ENCODE measurements at regions of chr4 and their contacts with region 1.

Region 1: DNA sequence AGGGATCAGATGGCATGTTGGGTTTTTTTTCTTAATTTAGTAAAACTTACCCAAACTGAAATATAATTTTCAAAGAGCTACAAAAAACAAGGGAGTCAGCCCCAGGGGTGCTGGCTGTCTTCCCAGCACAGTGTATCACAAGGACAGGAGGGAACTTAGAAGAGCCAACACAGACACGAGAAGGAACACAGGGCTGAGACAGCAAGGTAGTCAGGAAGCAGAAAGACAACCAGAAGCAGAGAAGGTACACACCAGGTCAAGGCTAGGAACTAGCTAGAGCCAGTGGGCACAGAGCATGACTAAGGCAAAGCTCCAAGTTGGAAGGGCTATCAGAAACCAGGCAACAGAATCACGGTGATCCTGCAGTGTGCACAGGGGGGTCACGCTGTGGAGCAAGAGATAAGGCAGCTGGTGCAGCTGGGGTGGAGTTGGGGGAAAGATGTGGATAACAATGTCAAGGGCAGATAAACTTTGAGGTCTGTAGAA is 168.7 kb downstream of the NR3C2 start:
- DNase-seq: no peak
- H3K4me3 Mint-ChIP-seq: no peak overlapping the region
- H3K27ac Mint-ChIP-seq: peak overlapping the region; percentile 59
- H3K4me1 Mint-ChIP-seq: peaks cover 21% of the 10 kb centered on the region
- H3K27me3 Mint-ChIP-seq: no peaks in the 10 kb centered on the region
- CTCF ChIP-seq: no peak

Region 2: DNA sequence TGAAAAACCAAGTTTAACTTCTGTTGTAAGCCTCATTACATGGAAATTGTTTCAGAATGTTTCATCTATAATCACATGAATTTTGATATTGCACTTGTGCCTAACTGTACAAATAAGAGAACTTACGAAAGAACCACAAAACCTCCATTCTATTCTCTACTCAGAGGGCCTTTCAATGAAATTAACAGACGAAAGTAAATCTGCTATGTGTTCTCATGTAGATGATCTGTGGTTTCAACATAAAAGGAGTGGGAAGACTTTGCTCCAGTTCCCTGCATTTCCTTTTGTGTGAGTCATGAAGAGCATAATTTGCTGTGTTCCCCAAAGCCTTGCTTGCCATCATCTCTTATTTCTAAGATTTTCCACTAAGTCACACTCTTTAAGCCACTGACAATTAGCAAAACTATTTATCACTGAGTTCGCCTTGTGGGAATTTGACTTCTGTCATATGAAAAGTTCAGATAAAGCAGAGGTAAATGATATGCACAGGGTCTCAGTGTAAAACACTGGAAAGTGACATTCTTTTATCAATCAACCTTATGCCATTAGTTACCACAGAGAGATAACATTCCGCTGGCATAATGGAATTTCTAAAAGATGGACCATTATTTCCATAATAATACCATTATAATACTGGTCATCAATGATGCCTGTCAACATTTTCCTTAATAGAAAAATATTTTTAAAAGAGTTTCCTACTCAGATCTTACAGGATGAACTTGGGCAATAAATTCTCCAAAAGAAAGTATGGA is 161.1 kb before region 1 on chr4:
- CTCF ChIA-PET with region 1: no interaction called
- intact Hi-C with region 1: no loop called
- DNase-seq: no peak
- H3K4me3 Mint-ChIP-seq: no peak overlapping the region
- H3K27ac Mint-ChIP-seq: no peak overlapping the region
- H3K4me1 Mint-ChIP-seq: no peaks in the 10 kb centered on the region
- H3K27me3 Mint-ChIP-seq: no peaks in the 10 kb centered on the region
- CTCF ChIP-seq: no peak

Region 3: DNA sequence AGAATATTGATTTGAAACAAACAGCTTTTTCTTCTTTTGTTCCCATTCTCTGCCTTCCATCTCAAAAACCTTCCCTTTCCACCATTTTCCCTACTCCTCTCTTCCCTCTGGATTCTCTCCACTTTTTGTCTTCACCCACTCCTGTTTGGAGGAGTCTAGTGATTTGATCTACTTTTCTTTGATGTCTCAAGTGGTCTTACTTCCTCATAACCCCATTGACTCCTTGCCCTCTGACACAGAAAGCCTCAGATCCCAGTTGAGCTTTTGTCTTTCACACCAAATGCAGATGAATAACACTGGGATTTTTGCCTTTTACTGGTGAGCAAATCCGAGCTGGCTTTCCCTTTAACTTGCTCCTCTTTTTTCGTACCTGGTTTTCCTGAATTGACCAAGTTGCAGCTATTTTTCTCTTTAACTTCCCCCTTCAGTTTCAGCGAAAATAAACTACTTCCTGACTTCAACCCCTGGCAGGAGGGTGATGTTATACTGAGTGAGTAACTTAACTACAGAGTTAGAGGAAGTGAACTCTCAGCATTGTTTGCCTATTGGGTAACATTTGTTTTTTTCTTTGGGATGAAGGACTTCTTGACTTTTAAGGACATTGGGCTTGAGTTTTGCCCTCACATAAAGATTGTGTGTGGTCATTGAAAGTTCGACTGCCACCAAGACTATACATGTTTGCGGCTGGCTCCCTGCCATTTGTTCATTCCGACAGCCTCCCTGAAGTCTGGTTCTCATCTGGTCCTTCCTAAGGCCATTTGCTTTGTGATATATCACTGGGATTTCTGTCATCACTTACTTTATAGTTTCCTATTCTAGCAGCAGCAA is 561.5 kb after region 1 on chr4:
- CTCF ChIA-PET with region 1: no interaction called
- intact Hi-C with region 1: no loop called
- DNase-seq: peak; percentile 24
- H3K4me3 Mint-ChIP-seq: peak overlapping the region; percentile 48
- H3K27ac Mint-ChIP-seq: peak overlapping the region; percentile 98
- H3K4me1 Mint-ChIP-seq: peaks cover 20% of the 10 kb centered on the region
- H3K27me3 Mint-ChIP-seq: no peaks in the 10 kb centered on the region
- CTCF ChIP-seq: no peak

Region 4: GRCh38 chr4:148857239-148857972 is 583.9 kb after region 1 on chr4:
- CTCF ChIA-PET with region 1: no interaction called
- intact Hi-C with region 1: loop called (anchors 10 kb)
- DNase-seq: no peak
- H3K4me3 Mint-ChIP-seq: no peak overlapping the region
- H3K27ac Mint-ChIP-seq: peak overlapping the region; percentile 6
- H3K4me1 Mint-ChIP-seq: peaks cover 44% of the 10 kb centered on the region
- H3K27me3 Mint-ChIP-seq: no peaks in the 10 kb centered on the region
- CTCF ChIP-seq: no peak

Region 5: DNA sequence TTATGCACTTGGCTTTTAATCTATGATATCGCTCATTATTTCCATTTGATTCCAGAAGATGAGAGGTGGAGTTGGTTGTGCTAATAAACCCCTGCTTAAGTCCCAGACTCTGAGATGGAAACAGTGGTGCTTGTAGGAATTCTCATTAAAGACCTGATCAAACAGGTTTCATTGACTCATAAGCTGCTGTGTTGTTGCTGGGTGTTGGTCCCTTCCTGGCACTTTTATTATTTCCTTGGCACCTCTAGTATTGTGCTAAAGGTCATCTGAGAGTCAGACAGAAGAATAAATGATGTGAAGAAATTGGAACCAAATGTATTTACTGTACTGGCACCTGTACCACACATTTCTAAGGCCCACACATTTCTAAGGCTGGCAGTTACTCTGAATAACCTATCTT is 713.4 kb after region 1 on chr4:
- CTCF ChIA-PET with region 1: no interaction called
- intact Hi-C with region 1: no loop called
- DNase-seq: peak; percentile 31
- H3K4me3 Mint-ChIP-seq: no peak overlapping the region
- H3K27ac Mint-ChIP-seq: peak overlapping the region; percentile 92
- H3K4me1 Mint-ChIP-seq: peaks cover 16% of the 10 kb centered on the region
- H3K27me3 Mint-ChIP-seq: no peaks in the 10 kb centered on the region
- CTCF ChIP-seq: no peak

Measured in Calu3 (cell line).